WTC11 (cell line): ENCODE measurements at regions of chr6 and their contacts with region 1.

Region 1: GRCh38 chr6:26103770-26104456 is 16.7 kb downstream of the HFE start:
- DNase-seq: peak; percentile 73
- ATAC-seq: peak; percentile 79
- H3K4me3 Mint-ChIP-seq: peak overlapping the region; percentile 84
- H3K27ac Mint-ChIP-seq: peak overlapping the region; percentile 98
- H3K4me1 Mint-ChIP-seq: peaks cover 23% of the 10 kb centered on the region
- H3K27me3 Mint-ChIP-seq: no peaks in the 10 kb centered on the region
- CTCF ChIP-seq: no peak

Region 2: DNA sequence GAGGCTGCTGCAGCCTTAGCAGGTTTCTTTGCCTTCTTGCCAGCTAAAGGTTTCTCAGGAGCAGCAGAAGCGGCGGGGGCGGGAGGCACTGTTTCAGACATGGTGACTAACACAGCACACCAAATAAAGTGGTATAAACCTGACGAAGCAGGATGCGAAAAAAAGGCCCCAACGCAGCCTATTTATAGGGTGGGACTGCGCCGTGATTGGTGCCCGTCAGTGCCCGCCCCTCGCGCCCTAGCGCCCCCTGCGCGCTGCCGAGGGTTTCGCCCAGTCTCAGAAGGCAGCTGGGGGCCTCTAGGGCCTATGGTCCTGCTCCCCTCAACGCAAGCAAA is 86.3 kb before region 1 on chr6:
- CTCF ChIA-PET with region 1: no interaction called
- POLR2A ChIA-PET with region 1: interaction called, 21 read pairs
- DNase-seq: peak; percentile 83
- ATAC-seq: peak; percentile 33
- H3K4me3 Mint-ChIP-seq: peak overlapping the region; percentile 76
- H3K27ac Mint-ChIP-seq: peak overlapping the region; percentile 96
- H3K4me1 Mint-ChIP-seq: peaks cover 36% of the 10 kb centered on the region
- H3K27me3 Mint-ChIP-seq: no peaks in the 10 kb centered on the region
- CTCF ChIP-seq: no peak

Region 3: GRCh38 chr6:26045065-26045927 is 58.6 kb before region 1 on chr6:
- CTCF ChIA-PET with region 1: no interaction called
- POLR2A ChIA-PET with region 1: interaction called, 33 read pairs
- DNase-seq: peak; percentile 43
- ATAC-seq: peak; percentile 22; the same call in 1 of the 2 replicates
- H3K4me3 Mint-ChIP-seq: peak overlapping the region; percentile 64
- H3K27ac Mint-ChIP-seq: peak overlapping the region; percentile 95
- H3K4me1 Mint-ChIP-seq: peaks cover 42% of the 10 kb centered on the region
- H3K27me3 Mint-ChIP-seq: no peaks in the 10 kb centered on the region
- CTCF ChIP-seq: no peak

Region 4: GRCh38 chr6:26054857-26055669 is 48.9 kb before region 1 on chr6:
- CTCF ChIA-PET with region 1: interaction called, 5 read pairs
- POLR2A ChIA-PET with region 1: interaction called, 54 read pairs
- DNase-seq: peak; percentile 74
- ATAC-seq: peak; percentile 66
- H3K4me3 Mint-ChIP-seq: peak overlapping the region; percentile 89
- H3K27ac Mint-ChIP-seq: peak overlapping the region; percentile 98
- H3K4me1 Mint-ChIP-seq: peaks cover 29% of the 10 kb centered on the region
- H3K27me3 Mint-ChIP-seq: no peaks in the 10 kb centered on the region
- CTCF ChIP-seq: no peak

Region 5: DNA sequence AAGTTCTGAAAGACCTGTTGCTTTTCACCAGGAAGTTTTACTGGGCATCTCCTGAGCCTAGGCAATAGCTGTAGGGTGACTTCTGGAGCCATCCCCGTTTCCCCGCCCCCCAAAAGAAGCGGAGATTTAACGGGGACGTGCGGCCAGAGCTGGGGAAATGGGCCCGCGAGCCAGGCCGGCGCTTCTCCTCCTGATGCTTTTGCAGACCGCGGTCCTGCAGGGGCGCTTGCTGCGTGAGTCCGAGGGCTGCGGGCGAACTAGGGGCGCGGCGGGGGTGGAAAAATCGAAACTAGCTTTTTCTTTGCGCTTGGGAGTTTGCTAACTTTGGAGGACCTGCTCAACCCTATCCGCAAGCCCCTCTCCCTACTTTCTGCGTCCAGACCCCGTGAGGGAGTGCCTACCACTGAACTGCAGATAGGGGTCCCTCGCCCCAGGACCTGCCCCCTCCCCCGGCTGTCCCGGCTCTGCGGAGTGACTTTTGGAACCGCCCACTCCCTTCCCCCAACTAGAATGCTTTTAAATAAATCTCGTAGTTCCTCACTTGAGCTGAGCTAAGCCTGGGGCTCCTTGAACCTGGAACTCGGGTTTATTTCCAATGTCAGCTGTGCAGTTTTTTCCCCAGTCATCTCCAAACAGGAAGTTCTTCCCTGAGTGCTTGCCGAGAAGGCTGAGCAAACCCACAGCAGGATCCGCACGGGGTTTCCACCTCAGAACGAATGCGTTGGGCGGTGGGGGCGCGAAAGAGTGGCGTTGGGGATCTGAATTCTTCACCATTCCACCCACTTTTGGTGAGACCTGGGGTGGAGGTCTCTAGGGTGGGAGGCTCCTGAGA is 16.4 kb before region 1 on chr6 and contains the start of gene HFE:
- CTCF ChIA-PET with region 1: interaction called, 3 read pairs
- POLR2A ChIA-PET with region 1: interaction called, 10 read pairs
- DNase-seq: peak; percentile 66
- ATAC-seq: peak; percentile 89
- H3K4me3 Mint-ChIP-seq: peak within 1 kb of the TSS; percentile 85
- H3K27ac Mint-ChIP-seq: peak within 1 kb of the TSS; percentile 88
- H3K4me1 Mint-ChIP-seq: peaks cover 20% of the 10 kb centered on the region
- H3K27me3 Mint-ChIP-seq: peaks cover 2% of the 10 kb centered on the region; the same call in 1 of the 2 replicates
- CTCF ChIP-seq: no peak
- total RNA-seq, gene HFE: 1.9 to 2.4 TPM (median 2.0 TPM) in 3 replicates

Region 6: GRCh38 chr6:26312501-26313390 is 208.8 kb after region 1 on chr6:
- CTCF ChIA-PET with region 1: no interaction called
- POLR2A ChIA-PET with region 1: no interaction called
- DNase-seq: peak; percentile 87
- ATAC-seq: peak; percentile 80
- H3K4me3 Mint-ChIP-seq: peak overlapping the region; percentile 88
- H3K27ac Mint-ChIP-seq: peak overlapping the region; percentile 97
- H3K4me1 Mint-ChIP-seq: peaks cover 11% of the 10 kb centered on the region
- H3K27me3 Mint-ChIP-seq: 0 out of 2 replicates have a peak, but pooled peaks cover 3% of the 10 kb centered on the region
- CTCF ChIP-seq: no peak

Region 7: DNA sequence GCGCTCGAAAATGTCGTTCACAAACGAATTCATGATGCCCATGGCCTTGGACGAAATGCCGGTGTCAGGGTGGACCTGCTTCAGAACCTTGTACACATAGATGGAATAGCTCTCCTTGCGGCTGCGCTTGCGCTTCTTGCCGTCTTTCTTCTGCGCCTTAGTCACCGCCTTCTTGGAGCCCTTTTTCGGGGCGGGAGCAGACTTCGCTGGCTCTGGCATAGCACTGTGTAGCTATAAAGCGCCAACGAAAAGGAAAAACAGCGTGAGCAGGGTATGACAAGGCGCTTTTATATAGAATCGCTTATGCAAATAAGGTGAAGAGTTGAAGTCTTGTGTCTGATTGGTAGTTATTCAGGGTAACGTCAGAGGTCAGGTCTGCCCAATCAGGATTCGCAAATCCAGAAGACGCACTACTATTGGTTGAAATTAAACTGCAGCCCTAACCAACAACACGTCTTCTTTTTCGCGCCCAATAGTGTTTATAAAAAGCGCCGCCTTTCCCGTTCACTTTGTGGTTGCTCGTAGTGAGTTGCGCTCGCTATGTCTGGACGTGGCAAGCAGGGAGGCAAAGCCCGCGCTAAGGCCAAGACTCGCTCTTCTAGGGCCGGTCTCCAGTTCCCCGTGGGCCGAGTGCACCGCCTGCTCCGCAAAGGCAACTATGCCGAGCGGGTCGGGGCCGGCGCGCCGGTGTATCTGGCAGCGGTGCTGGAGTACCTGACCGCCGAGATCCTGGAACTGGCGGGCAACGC is 1028.8 kb after region 1 on chr6:
- CTCF ChIA-PET with region 1: no interaction called
- POLR2A ChIA-PET with region 1: interaction called, 14 read pairs
- DNase-seq: peak; percentile 85
- ATAC-seq: peak; percentile 86
- H3K4me3 Mint-ChIP-seq: no peak overlapping the region
- H3K27ac Mint-ChIP-seq: no peak overlapping the region
- H3K4me1 Mint-ChIP-seq: peaks cover 65% of the 10 kb centered on the region
- H3K27me3 Mint-ChIP-seq: no peaks in the 10 kb centered on the region
- CTCF ChIP-seq: no peak